ENCODE measurements at regions of chr15 and their contacts with region 1.

Region 1: DNA sequence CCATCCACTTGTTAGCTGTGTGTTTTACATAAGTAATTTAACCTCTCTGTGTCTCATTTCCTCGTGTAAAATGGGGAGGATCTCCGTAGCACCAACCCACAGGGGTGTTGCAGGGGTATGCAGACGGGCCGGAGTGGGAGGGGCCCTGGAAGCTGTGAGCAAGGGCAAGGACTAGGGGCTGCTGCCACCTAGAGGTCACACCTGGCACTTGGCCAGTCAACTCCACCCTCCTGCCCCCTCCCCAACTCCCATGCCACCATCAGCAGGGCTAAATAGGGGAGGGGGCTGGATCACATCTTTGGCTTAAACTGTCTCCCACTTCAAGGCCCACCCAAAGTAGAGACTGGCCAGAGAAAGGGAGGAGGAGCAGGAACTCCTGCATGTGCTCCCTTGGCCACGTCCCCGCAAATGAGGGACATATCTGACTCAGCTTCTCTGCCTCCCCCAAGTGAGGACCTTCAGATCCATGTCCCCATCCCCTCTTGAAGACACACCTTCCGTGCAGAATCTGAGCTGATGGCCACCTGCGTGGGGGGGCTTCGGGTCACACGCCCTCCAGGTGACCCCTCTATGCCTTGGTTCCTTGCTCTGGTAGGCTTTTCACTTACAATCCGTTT is 2.6 kb downstream of the CCDC9B start:
- DNase-seq: peak in 1 of 2 experiments; percentile 93
- H3K4me3 ChIP-seq: no peak overlapping the region
- H3K27ac ChIP-seq: no peak overlapping the region
- H3K4me1 ChIP-seq: peaks cover 0 to 44% (median 28%) of the 10 kb centered on the region in 4 experiments; a peak in 6 of 7 replicates
- H3K27me3 ChIP-seq: peaks cover 0 to 4% (median under 1%) of the 10 kb centered on the region in 4 experiments; a peak in 1 of 7 replicates
- CTCF ChIP-seq: peak in 2 of 3 experiments; percentile 90 to 97; a peak in 3 of 4 replicates
- EP300 ChIP-seq: no peak
- POLR2A ChIP-seq: no peak
- RAD21 ChIP-seq: peak; percentile 87 to 88

Region 2: GRCh38 chr15:40252438-40253166 is 85.5 kb before region 1 on chr15:
- CTCF ChIA-PET with region 1: interaction called, 18 read pairs
- POLR2A ChIA-PET with region 1: interaction called, 3 read pairs
- DNase-seq: peak in 1 of 2 experiments; percentile 76
- H3K4me3 ChIP-seq: peak overlapping the region; percentile 50 to 71 (median 54)
- H3K27ac ChIP-seq: no peak overlapping the region
- H3K4me1 ChIP-seq: peaks cover 0 to 10% (median 7%) of the 10 kb centered on the region in 4 experiments; a peak in 5 of 7 replicates
- H3K27me3 ChIP-seq: peaks cover 11 to 41% (median 32%) of the 10 kb centered on the region in 4 experiments
- CTCF ChIP-seq: no peak
- EP300 ChIP-seq: no peak
- POLR2A ChIP-seq: peak in 1 of 2 experiments; percentile 30; a peak in 1 of 3 replicates
- RAD21 ChIP-seq: no peak

Region 3: DNA sequence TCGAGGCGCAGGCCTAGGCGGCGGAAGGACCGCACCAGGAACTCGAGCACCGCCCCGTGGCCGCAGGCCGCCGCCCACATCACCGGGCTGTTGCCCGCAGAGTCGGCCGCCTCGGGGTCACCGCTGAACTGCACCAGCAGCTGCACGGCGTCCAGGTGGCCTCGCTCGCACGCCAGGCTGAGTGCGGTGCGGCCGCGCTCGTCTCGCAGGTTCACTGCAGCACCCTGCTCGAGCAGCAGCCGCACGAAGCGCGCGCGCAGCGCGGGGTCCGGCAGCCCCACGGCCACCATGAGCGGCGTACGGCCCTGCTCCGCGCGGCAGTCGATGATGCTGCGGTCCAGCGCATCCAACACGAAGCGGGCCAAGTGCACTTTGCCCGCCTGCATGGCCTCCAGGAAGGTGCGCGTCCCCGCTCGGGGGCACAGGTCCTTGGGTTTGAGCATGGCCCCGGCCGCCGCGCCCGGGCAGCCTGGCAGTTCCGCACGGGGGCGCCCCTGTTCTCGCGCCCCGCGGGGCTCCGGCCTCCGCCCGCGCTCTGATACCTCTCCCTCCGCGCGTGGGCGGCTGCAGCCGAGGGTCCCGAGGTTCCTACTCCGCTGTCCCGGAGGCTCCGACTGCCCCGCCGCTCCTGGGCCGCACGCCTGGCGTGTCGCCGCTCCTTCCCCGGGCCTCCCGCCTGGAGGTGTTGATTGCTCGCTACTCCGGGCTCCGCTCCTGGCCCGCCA is 55.8 kb before region 1 on chr15:
- CTCF ChIA-PET with region 1: interaction called, 295 read pairs
- POLR2A ChIA-PET with region 1: interaction called, 4 read pairs
- DNase-seq: peak in 1 of 2 experiments; percentile 86
- H3K4me3 ChIP-seq: peak overlapping the region; percentile 21 to 61 (median 32)
- H3K27ac ChIP-seq: no peak overlapping the region
- H3K4me1 ChIP-seq: peaks cover 17 to 47% (median 34%) of the 10 kb centered on the region in 4 experiments
- H3K27me3 ChIP-seq: peaks cover 40 to 69% (median 54%) of the 10 kb centered on the region in 4 experiments
- CTCF ChIP-seq: peak in 2 of 3 experiments; percentile 38 to 60; a peak in 3 of 4 replicates
- EP300 ChIP-seq: no peak
- POLR2A ChIP-seq: no peak
- RAD21 ChIP-seq: peak; percentile 1 to 26; a peak in 2 of 4 replicates

Region 4: GRCh38 chr15:40357723-40358470 is 19.7 kb after region 1 on chr15 and contains the start of gene DISP2:
- CTCF ChIA-PET with region 1: interaction called, 452 read pairs
- POLR2A ChIA-PET with region 1: interaction called, 8 read pairs
- DNase-seq: peak in 1 of 2 experiments; percentile 98
- H3K4me3 ChIP-seq: peak within 1 kb of the TSS; percentile 44 to 69 (median 62)
- H3K27ac ChIP-seq: no peak within 1 kb of the TSS
- H3K4me1 ChIP-seq: peaks cover 11 to 22% (median 16%) of the 10 kb centered on the region in 4 experiments
- H3K27me3 ChIP-seq: peaks cover 0 to 18% (median 8%) of the 10 kb centered on the region in 4 experiments; a peak in 3 of 7 replicates
- CTCF ChIP-seq: no peak
- EP300 ChIP-seq: peak in 1 of 2 experiments; percentile 84; a peak in 1 of 3 replicates
- POLR2A ChIP-seq: no peak
- RAD21 ChIP-seq: no peak
- total RNA-seq, gene DISP2: 1.2 and 3.4 TPM in 2 replicates

Region 5: GRCh38 chr15:40421246-40422157 is 83.4 kb after region 1 on chr15:
- CTCF ChIA-PET with region 1: interaction called, 184 read pairs
- POLR2A ChIA-PET with region 1: interaction called, 5 read pairs
- DNase-seq: peak; percentile 62 to 95
- H3K4me3 ChIP-seq: peak overlapping the region in 1 of 4 experiments; percentile 45; a peak in 3 of 8 replicates
- H3K27ac ChIP-seq: no peak overlapping the region
- H3K4me1 ChIP-seq: peaks cover 0 to 6% (median 3%) of the 10 kb centered on the region in 4 experiments; a peak in 4 of 7 replicates
- H3K27me3 ChIP-seq: peaks cover 0 to 2% (median 0%) of the 10 kb centered on the region in 4 experiments; a peak in 1 of 7 replicates
- CTCF ChIP-seq: peak; percentile 95 to 97 (median 96)
- EP300 ChIP-seq: no peak
- POLR2A ChIP-seq: peak in 1 of 2 experiments; percentile 38; a peak in 1 of 3 replicates
- RAD21 ChIP-seq: peak; percentile 91 to 95

Measured in H1 (cell line).